ENCODE measurements at regions of chr2 and their contacts with region 1.

Region 1: GRCh38 chr2:135709992-135710391 is 31.7 kb upstream of the UBXN4 start:
- DNase-seq: no peak
- H3K4me3 ChIP-seq: no peak overlapping the region
- H3K27ac ChIP-seq: no peak overlapping the region
- H3K4me1 ChIP-seq: no peaks in the 10 kb centered on the region
- H3K27me3 ChIP-seq: no peaks in the 10 kb centered on the region
- CTCF ChIP-seq: peak; percentile 83 to 98 (median 93)
- EP300 ChIP-seq: no peak
- POLR2A ChIP-seq: no peak

Region 2: DNA sequence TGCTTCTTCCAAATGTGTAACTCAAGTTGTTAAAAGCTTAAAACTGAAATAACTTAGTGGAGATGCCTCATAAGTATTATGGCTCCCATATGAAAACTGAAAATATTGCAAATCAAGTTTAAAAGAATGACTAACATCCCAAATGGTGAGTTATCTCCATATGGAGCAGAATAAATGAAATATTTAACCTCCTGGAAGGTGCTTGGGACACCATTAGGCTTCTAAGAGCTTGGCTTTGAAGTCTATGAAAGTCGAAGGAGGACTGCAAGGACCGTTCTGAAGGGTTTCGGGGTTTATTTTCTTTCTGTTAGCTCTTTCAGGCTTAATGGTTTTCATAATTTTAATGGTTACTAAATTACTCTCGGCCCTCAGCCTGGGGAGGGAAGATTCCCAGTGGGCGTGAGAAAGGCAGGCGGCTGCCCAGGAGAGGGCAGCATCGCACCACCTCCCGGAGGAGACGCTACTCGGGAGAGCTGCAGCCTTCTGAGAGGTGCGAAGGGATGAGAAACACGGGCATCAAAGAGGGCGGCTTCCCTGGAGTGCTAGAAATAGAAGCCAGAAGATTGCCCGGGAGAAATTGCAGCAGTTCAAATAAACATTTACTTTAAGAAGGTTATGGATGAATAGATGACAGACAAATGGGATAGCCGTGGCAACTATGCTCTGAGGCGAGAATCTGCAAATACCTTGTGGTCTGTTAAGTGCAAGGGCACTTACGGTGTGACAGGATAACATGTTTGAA is 705.8 kb before region 1 on chr2:
- intact Hi-C with region 1: loop called (anchors 2 kb)
- DNase-seq: no peak
- H3K4me3 ChIP-seq: peak overlapping the region; percentile 6 to 38 (median 32)
- H3K27ac ChIP-seq: no peak overlapping the region
- H3K4me1 ChIP-seq: peaks cover 8 to 17% (median 12%) of the 10 kb centered on the region in 4 donors
- H3K27me3 ChIP-seq: peaks cover 0 to 5% (median 0%) of the 10 kb centered on the region in 4 donors
- CTCF ChIP-seq: peak; percentile 85 to 93 (median 86)
- EP300 ChIP-seq: no peak
- POLR2A ChIP-seq: no peak